ENCODE measurements at regions of chr10 and their contacts with region 1.

Region 1: DNA sequence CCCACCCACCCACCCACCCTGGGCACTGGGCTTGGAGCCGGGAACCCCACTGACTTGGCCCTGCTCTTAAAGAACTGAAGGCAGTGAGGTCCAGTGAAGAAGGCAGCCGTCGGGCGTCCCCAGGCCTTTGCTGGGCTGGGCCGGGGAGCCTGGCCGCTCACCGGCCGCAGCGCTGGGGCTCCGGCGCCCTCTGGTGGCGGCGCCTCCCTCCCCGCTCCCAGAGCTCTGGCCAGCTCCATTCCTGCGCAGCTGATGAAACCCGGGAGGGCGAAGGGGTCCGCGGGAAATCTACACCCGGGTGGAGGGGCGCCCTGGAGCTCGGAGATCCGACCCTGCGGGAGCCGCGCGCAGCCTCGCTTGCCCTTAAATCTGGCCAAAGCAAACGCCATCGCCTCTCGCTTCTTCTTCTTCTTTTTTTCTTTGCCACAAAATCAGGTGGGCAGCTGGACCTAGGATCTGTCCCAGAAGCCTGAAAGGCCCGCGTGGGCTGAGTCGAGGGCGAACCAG is 1.7 kb upstream of the CXCL12 start:
- DNase-seq: peak; percentile 55 to 82
- H3K4me3 ChIP-seq: no peak overlapping the region
- H3K4me3 Mint-ChIP-seq: peak overlapping the region; percentile 38
- H3K27ac Mint-ChIP-seq: no peak overlapping the region
- H3K4me1 ChIP-seq: peaks cover 9% of the 10 kb centered on the region
- H3K4me1 Mint-ChIP-seq: no peaks in the 10 kb centered on the region
- H3K27me3 ChIP-seq: peaks cover 1% of the 10 kb centered on the region
- H3K27me3 Mint-ChIP-seq: peaks cover 18% of the 10 kb centered on the region
- CTCF ChIP-seq: peak; percentile 92 to 98

Region 2: DNA sequence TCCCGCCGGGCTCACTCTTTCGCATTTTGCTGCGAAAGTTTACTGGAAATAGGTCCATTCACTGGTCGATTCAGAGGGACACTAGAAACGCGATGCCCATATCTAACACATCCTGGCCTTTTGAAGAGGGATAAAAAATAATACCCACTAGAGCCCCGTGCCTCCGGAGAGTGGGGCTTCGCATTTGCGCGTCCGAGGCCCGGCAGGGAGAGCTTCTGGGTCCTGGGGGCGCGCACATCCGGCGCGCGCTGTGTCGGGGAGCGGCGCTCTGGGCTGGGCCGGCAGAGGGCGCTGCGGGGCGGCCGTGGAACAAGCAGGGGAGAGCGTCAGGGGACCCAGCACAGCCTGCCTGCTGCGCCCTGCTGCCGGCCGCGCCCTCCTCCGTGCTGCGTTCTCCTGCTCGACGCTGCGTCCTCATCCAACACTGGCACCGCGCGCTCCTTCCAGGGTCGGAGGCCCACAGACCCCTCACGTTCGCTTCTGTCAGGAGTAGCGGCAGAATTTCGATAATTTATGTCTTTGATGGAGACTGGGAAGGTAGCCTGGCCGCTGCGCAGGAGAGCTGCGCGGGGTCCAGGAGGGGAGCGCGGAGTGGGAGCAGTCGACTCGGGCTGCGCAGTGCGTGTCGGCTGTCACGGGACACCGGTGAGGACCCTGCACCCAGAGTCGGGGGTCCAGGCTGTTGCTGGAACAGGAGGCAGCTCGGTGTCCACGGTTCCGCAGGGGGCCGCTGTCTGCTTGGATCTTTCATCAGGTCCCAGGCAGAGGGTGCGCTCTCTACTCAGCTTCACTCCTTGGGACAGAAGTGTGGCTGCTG is 696.4 kb before region 1 on chr10:
- CTCF ChIA-PET with region 1: interaction called, 14 read pairs
- POLR2A ChIA-PET with region 1: no interaction called
- intact Hi-C with region 1: no loop called
- DNase-seq: peak; percentile 79 to 91
- H3K4me3 ChIP-seq: peak overlapping the region; percentile 42
- H3K4me3 Mint-ChIP-seq: peak overlapping the region; percentile 76
- H3K27ac Mint-ChIP-seq: no peak overlapping the region
- H3K4me1 ChIP-seq: no peaks in the 10 kb centered on the region
- H3K4me1 Mint-ChIP-seq: no peaks in the 10 kb centered on the region
- H3K27me3 ChIP-seq: 0 out of 2 replicates have a peak, but pooled peaks cover 1% of the 10 kb centered on the region
- H3K27me3 Mint-ChIP-seq: peaks cover 40% of the 10 kb centered on the region
- CTCF ChIP-seq: peak; percentile 83 to 99

Region 3: DNA sequence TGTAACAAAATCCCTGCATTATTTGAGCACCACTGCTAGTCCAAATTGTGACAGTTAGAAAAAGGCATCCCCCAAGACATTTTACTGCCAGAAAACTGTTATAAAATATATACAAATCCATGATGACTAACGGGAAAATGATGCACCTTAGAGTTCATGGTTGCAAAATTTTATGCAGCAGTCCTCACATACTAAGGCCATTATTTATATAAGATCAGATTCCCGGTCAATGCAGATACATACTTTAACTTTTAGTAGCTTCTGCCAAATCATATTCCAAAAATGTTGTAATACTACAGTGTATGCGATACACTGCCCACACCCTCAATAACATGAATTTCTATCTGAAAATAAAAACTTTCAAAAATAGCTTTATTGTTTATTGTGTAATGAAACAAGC is 498.0 kb before region 1 on chr10:
- CTCF ChIA-PET with region 1: interaction called, 6 read pairs
- POLR2A ChIA-PET with region 1: no interaction called
- intact Hi-C with region 1: loop called (anchors 10 kb)
- DNase-seq: no peak
- H3K4me3 ChIP-seq: no peak overlapping the region
- H3K4me3 Mint-ChIP-seq: no peak overlapping the region
- H3K27ac Mint-ChIP-seq: no peak overlapping the region
- H3K4me1 ChIP-seq: no peaks in the 10 kb centered on the region
- H3K4me1 Mint-ChIP-seq: no peaks in the 10 kb centered on the region
- H3K27me3 ChIP-seq: 0 out of 2 replicates have a peak, but pooled peaks cover 2% of the 10 kb centered on the region
- H3K27me3 Mint-ChIP-seq: peaks cover 29% of the 10 kb centered on the region
- CTCF ChIP-seq: no peak

Region 4: DNA sequence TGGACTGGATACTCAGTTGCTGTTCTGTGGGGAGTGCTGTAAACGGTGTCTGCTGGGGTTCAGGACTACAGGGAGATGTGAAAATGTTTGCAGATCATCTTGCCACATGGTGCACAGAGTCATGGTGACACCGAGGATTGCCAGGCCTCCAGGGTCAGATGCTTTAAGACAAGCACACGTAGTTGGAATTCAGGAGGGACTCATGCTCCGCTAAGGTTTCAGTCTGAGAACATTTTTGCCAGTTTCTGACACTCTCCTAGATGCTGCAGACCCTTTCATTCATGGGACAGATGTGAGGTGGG is 213.0 kb before region 1 on chr10:
- CTCF ChIA-PET with region 1: interaction called, 3 read pairs
- POLR2A ChIA-PET with region 1: no interaction called
- intact Hi-C with region 1: loop called (anchors 10 kb)
- DNase-seq: no peak
- H3K4me3 ChIP-seq: no peak overlapping the region
- H3K4me3 Mint-ChIP-seq: no peak overlapping the region
- H3K27ac Mint-ChIP-seq: no peak overlapping the region
- H3K4me1 ChIP-seq: 0 out of 2 replicates have a peak, but pooled peaks cover 3% of the 10 kb centered on the region
- H3K4me1 Mint-ChIP-seq: no peaks in the 10 kb centered on the region
- H3K27me3 ChIP-seq: no peaks in the 10 kb centered on the region; the same call in 1 of the 2 replicates
- H3K27me3 Mint-ChIP-seq: peaks cover 17% of the 10 kb centered on the region
- CTCF ChIP-seq: no peak

Region 5: GRCh38 chr10:44306762-44307161 is 79.8 kb before region 1 on chr10:
- CTCF ChIA-PET with region 1: interaction called, 3 read pairs
- POLR2A ChIA-PET with region 1: no interaction called
- intact Hi-C with region 1: loop called (anchors 1 kb)
- DNase-seq: peak in 1 of 2 experiments; percentile 32
- H3K4me3 ChIP-seq: no peak overlapping the region
- H3K4me3 Mint-ChIP-seq: no peak overlapping the region
- H3K27ac Mint-ChIP-seq: no peak overlapping the region
- H3K4me1 ChIP-seq: no peaks in the 10 kb centered on the region
- H3K4me1 Mint-ChIP-seq: no peaks in the 10 kb centered on the region
- H3K27me3 ChIP-seq: no peaks in the 10 kb centered on the region
- H3K27me3 Mint-ChIP-seq: peaks cover 3% of the 10 kb centered on the region
- CTCF ChIP-seq: peak in 1 of 2 experiments; percentile 39

Region 6: GRCh38 chr10:44864637-44865288 is 478.2 kb after region 1 on chr10:
- CTCF ChIA-PET with region 1: no interaction called
- POLR2A ChIA-PET with region 1: no interaction called
- intact Hi-C with region 1: loop called (anchors 2 kb)
- DNase-seq: peak; percentile 91 to 98
- H3K4me3 ChIP-seq: peak overlapping the region; percentile 46
- H3K4me3 Mint-ChIP-seq: peak overlapping the region; percentile 84
- H3K27ac Mint-ChIP-seq: peak overlapping the region; percentile 77
- H3K4me1 ChIP-seq: peaks cover 15% of the 10 kb centered on the region
- H3K4me1 Mint-ChIP-seq: peaks cover 11% of the 10 kb centered on the region
- H3K27me3 ChIP-seq: peaks cover 4% of the 10 kb centered on the region; the same call in 1 of the 2 replicates
- H3K27me3 Mint-ChIP-seq: peaks cover 34% of the 10 kb centered on the region
- CTCF ChIP-seq: peak; percentile 98 to 99